Endothelial cell of umbilical vein (primary cell): ENCODE measurements at regions of chr19 and their contacts with region 1.

Region 1: DNA sequence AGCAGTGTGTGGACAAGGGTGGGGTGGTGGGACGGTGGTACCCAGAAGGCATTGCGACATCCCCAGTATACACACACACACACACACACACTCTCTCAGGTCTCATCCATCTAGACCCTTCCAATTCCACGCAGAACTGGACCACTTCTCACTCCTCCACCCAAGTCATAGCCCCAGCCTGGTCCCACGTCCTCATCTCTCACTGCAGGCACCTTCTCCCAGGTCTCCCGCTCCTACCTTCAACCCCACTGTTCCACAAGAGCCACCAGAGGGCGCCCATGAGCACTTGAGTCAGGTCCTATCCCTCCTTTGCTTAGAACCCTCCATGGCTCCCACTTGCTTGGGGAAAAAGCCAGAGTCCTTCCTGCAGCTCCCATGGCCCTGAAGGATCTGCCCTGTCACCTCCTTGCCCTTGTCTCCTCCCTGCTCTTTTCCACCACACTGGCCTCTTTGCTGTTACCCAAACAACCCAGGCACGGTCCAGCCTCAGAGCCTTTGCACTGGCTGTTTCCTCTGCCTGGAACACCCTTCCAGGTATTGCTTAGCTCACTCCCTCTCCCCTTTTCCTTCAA is 62.6 kb downstream of the IER2 start:
- DNase-seq: peak; percentile 39
- H3K4me3 ChIP-seq: no peak overlapping the region
- H3K27ac ChIP-seq: no peak overlapping the region
- H3K4me1 ChIP-seq: no peaks in the 10 kb centered on the region
- H3K27me3 ChIP-seq: no peaks in the 10 kb centered on the region
- CTCF ChIP-seq: peak; percentile 65 to 74
- POLR2A ChIP-seq: no peak

Region 2: GRCh38 chr19:13120817-13121216 is 92.0 kb before region 1 on chr19:
- CTCF ChIA-PET with region 1: no interaction called
- POLR2A ChIA-PET with region 1: no interaction called
- dilution Hi-C with region 1: no loop called
- intact Hi-C with region 1: no loop called
- DNase-seq: no peak
- H3K4me3 ChIP-seq: no peak overlapping the region
- H3K27ac ChIP-seq: no peak overlapping the region
- H3K4me1 ChIP-seq: peaks cover 9% of the 10 kb centered on the region
- H3K27me3 ChIP-seq: no peaks in the 10 kb centered on the region
- CTCF ChIP-seq: no peak
- POLR2A ChIP-seq: no peak

Region 3: GRCh38 chr19:13162518-13163314 is 50.1 kb before region 1 on chr19:
- CTCF ChIA-PET with region 1: interaction called, 3 read pairs
- POLR2A ChIA-PET with region 1: no interaction called
- dilution Hi-C with region 1: no loop called
- intact Hi-C with region 1: loop called (anchors 1 kb)
- DNase-seq: peak; percentile 97
- H3K4me3 ChIP-seq: peak overlapping the region in 1 of 3 experiments; percentile 28
- H3K27ac ChIP-seq: peak overlapping the region; percentile 99
- H3K4me1 ChIP-seq: peaks cover 42% of the 10 kb centered on the region
- H3K27me3 ChIP-seq: no peaks in the 10 kb centered on the region
- CTCF ChIP-seq: no peak
- POLR2A ChIP-seq: peak; percentile 69

Region 4: DNA sequence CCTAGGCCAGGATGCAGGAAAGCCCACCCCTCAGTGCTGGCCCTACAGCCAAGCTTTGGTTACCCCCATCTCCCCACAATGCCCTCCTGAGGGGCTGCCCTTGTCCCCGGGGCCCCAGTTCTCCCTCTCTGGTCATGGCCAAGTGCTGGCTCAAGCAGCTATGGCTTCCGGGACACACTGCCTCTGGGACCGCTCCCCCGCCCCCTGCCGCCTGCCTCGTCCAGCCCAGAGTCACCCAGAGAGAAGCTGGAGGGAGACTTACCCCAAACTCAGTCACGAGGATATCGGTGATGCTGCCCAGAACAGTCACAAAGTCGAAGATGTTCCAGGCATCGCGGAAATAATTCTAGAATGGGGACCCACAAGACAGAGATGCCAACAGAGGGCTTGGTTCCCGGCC is 32.1 kb after region 1 on chr19:
- CTCF ChIA-PET with region 1: interaction called, 8 read pairs
- POLR2A ChIA-PET with region 1: no interaction called
- dilution Hi-C with region 1: no loop called
- intact Hi-C with region 1: loop called (anchors 5 kb)
- DNase-seq: no peak
- H3K4me3 ChIP-seq: no peak overlapping the region
- H3K27ac ChIP-seq: no peak overlapping the region
- H3K4me1 ChIP-seq: peaks cover 3% of the 10 kb centered on the region
- H3K27me3 ChIP-seq: no peaks in the 10 kb centered on the region
- CTCF ChIP-seq: no peak
- POLR2A ChIP-seq: no peak

Region 5: DNA sequence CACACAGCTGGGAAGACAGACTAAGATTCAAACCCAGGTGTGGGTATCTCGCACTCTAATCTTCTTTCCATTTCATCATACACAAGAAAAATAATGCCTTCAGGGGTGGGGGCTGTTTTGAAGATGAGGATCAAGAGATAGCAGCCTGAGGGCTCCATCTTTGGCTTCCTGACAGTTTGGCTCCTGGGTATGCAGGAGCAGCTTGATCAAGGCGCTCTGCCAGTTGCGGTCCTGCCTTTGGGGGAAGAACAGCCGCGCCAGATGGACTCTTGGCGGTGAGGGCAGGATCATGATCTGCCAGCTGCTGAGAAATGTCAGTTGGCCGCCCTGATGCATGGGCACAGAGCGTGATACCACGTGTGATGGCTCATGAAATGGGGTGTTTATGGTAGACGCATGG is 56.5 kb after region 1 on chr19:
- CTCF ChIA-PET with region 1: no interaction called
- POLR2A ChIA-PET with region 1: no interaction called
- dilution Hi-C with region 1: no loop called
- intact Hi-C with region 1: no loop called
- DNase-seq: no peak
- H3K4me3 ChIP-seq: no peak overlapping the region
- H3K27ac ChIP-seq: no peak overlapping the region
- H3K4me1 ChIP-seq: no peaks in the 10 kb centered on the region
- H3K27me3 ChIP-seq: no peaks in the 10 kb centered on the region
- CTCF ChIP-seq: no peak
- POLR2A ChIP-seq: no peak